ENCODE measurements at regions of chr3 and their contacts with region 1.

Region 1: GRCh38 chr3:149086232-149086988 is at the start of gene HLTF:
- DNase-seq: peak; percentile 93
- ATAC-seq: peak; percentile 99
- H3K4me3 ChIP-seq: peak within 1 kb of the TSS; percentile 65 to 95 (median 86)
- H3K4me3 Mint-ChIP-seq: peak within 1 kb of the TSS; percentile 91
- H3K27ac ChIP-seq: peak within 1 kb of the TSS in 1 of 2 donors; percentile 38
- H3K27ac Mint-ChIP-seq: peak within 1 kb of the TSS; percentile 87
- H3K4me1 ChIP-seq: peaks cover 10 to 14% of the 10 kb centered on the region in 2 donors
- H3K4me1 Mint-ChIP-seq: peaks cover 25% of the 10 kb centered on the region
- H3K27me3 ChIP-seq: no peaks in the 10 kb centered on the region
- H3K27me3 Mint-ChIP-seq: no peaks in the 10 kb centered on the region
- CTCF ChIP-seq: no peak
- total RNA-seq, gene HLTF: 19.1 and 22.9 TPM in 2 replicates

Region 2: GRCh38 chr3:148991194-148992026 is 95.0 kb before region 1 on chr3 and contains the start of gene GYG1:
- CTCF ChIA-PET with region 1: interaction called, 3 read pairs
- POLR2A ChIA-PET with region 1: no interaction called
- intact Hi-C with region 1: loop called (anchors 1 kb)
- DNase-seq: peak; percentile 89
- ATAC-seq: peak; percentile 89
- H3K4me3 ChIP-seq: peak within 1 kb of the TSS; percentile 60 to 93 (median 86)
- H3K4me3 Mint-ChIP-seq: peak within 1 kb of the TSS; percentile 85
- H3K27ac ChIP-seq: peak within 1 kb of the TSS; percentile 41 to 73
- H3K27ac Mint-ChIP-seq: peak within 1 kb of the TSS; percentile 82
- H3K4me1 ChIP-seq: peaks cover 14 to 19% of the 10 kb centered on the region in 2 donors
- H3K4me1 Mint-ChIP-seq: peaks cover 15% of the 10 kb centered on the region
- H3K27me3 ChIP-seq: no peaks in the 10 kb centered on the region
- H3K27me3 Mint-ChIP-seq: no peaks in the 10 kb centered on the region
- CTCF ChIP-seq: peak; percentile 18
- total RNA-seq, gene GYG1: 16.3 and 20.4 TPM in 2 replicates

Region 3: DNA sequence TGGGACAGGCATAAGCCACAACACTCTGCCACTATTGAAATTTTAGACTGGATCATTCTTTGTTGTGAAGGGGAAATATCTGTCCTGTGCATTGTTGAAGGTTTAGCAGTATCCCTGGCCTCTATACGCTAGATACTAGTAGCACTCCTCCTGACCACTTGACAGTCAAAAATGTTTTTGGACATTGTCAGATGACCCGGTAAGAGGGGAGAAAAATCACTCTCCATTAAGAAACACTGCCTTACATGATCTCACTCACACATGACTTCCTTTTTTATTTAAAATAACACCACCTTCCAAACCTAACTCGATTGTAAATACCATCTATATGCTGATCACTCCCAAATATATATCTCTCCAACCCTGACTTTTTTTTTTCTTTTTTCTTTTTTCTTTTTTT is 15.2 kb after region 1 on chr3:
- CTCF ChIA-PET with region 1: no interaction called
- POLR2A ChIA-PET with region 1: no interaction called
- intact Hi-C with region 1: loop called (anchors 2 kb)
- DNase-seq: no peak
- ATAC-seq: no peak
- H3K4me3 ChIP-seq: no peak overlapping the region
- H3K4me3 Mint-ChIP-seq: no peak overlapping the region
- H3K27ac ChIP-seq: no peak overlapping the region
- H3K27ac Mint-ChIP-seq: no peak overlapping the region
- H3K4me1 ChIP-seq: no peaks in the 10 kb centered on the region
- H3K4me1 Mint-ChIP-seq: peaks cover 2% of the 10 kb centered on the region
- H3K27me3 ChIP-seq: no peaks in the 10 kb centered on the region
- H3K27me3 Mint-ChIP-seq: peaks cover 6% of the 10 kb centered on the region
- CTCF ChIP-seq: no peak

Region 4: GRCh38 chr3:149330609-149331331 is 244.4 kb after region 1 on chr3:
- CTCF ChIA-PET with region 1: no interaction called
- POLR2A ChIA-PET with region 1: no interaction called
- intact Hi-C with region 1: no loop called
- DNase-seq: no peak
- ATAC-seq: no peak
- H3K4me3 ChIP-seq: no peak overlapping the region
- H3K4me3 Mint-ChIP-seq: no peak overlapping the region
- H3K27ac ChIP-seq: no peak overlapping the region
- H3K27ac Mint-ChIP-seq: no peak overlapping the region
- H3K4me1 ChIP-seq: no peaks in the 10 kb centered on the region
- H3K4me1 Mint-ChIP-seq: no peaks in the 10 kb centered on the region
- H3K27me3 ChIP-seq: peaks cover 0 to 3% (median 0%) of the 10 kb centered on the region in 4 experiments
- H3K27me3 Mint-ChIP-seq: peaks cover 13% of the 10 kb centered on the region
- CTCF ChIP-seq: no peak

Measured in B cell (primary cell).